ENCODE measurements at regions of chr2 and their contacts with region 1.

Region 1: GRCh38 chr2:70919672-70920366 is 15.9 kb upstream of the ATP6V1B1 start:
- DNase-seq: peak; percentile 86
- ATAC-seq: peak; percentile 74
- H3K4me3 Mint-ChIP-seq: no peak overlapping the region
- H3K27ac Mint-ChIP-seq: no peak overlapping the region
- H3K4me1 Mint-ChIP-seq: no peaks in the 10 kb centered on the region
- H3K27me3 Mint-ChIP-seq: peaks cover 14% of the 10 kb centered on the region

Region 2: DNA sequence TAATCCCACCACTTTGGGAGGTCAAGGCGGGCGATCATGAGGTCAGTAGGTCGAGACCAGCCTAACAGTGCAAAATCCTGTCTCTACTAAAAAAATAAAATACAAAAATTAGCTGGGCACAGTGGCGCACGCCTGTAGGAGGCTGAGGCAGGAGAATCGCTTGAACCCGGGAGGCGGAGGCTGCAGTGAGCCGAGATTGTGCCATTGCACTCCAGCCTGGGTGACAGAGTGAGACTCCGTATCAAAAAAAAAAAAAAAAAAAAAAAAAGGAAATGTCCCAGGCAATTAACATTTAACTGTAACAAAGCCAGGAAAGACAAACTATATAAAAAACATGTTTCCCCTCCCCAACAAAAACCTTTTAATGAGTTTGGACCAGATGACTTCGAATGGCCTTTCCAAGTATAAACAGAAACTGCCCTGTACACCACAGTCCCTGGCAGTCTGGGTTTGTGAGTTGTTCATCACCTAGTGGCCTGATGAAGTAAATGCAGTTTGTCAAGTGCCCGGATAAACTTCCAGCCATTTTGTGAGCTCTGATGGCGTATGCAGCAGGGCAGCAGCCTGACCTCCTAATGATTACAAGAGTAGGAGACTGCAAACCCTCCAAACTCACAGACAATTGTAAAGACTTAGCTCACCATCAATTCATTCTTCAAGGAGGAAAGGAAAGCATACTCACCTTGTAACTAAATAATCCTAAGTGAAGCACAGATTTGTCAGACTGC is 849.1 kb before region 1 on chr2:
- CTCF ChIA-PET with region 1: no interaction called
- POLR2A ChIA-PET with region 1: no interaction called
- intact Hi-C with region 1: no loop called
- DNase-seq: peak; percentile 73
- ATAC-seq: peak; percentile 60
- H3K4me3 Mint-ChIP-seq: peak overlapping the region; percentile 48
- H3K27ac Mint-ChIP-seq: peak overlapping the region; percentile 94
- H3K4me1 Mint-ChIP-seq: peaks cover 51% of the 10 kb centered on the region
- H3K27me3 Mint-ChIP-seq: no peaks in the 10 kb centered on the region

Region 3: DNA sequence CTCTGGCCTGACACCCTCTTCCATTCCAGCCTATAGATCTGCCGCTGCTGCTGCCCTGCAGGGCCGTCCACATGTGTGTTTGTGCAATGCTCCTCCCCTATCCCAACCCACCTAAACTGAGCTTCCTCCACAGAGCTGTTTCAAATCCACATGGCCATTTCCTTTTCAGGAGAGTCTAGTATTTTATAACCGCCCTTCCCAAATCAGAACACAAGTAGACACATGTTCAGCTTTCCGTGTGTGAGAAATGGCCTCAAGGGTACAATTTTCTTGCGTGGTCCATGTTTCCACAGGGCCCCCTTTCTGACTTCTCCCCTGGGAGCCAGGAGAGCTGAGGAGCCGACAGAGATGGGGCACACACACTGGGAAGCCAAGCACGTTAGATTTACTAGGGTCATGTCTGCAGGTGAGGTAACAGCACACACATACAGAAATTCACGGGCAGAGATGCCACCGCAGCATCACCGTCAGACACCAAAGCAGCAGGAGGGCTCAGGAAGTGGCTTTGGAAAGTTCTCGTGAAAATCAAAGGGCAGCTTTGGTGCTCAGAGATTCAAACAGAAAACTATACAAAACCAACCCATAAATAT is 263.3 kb before region 1 on chr2:
- CTCF ChIA-PET with region 1: no interaction called
- POLR2A ChIA-PET with region 1: no interaction called
- intact Hi-C with region 1: loop called in 1 of 2 experiments (anchors 1 kb)
- DNase-seq: peak; percentile 57
- ATAC-seq: peak; percentile 61
- H3K4me3 Mint-ChIP-seq: no peak overlapping the region
- H3K27ac Mint-ChIP-seq: peak overlapping the region; percentile 29
- H3K4me1 Mint-ChIP-seq: peaks cover 32% of the 10 kb centered on the region
- H3K27me3 Mint-ChIP-seq: no peaks in the 10 kb centered on the region

Region 4: GRCh38 chr2:70789304-70790135 is 130.3 kb before region 1 on chr2:
- CTCF ChIA-PET with region 1: interaction called, 24 read pairs
- POLR2A ChIA-PET with region 1: no interaction called
- intact Hi-C with region 1: loop called in 1 of 2 experiments (anchors 1 kb)
- DNase-seq: peak; percentile 88
- ATAC-seq: peak; percentile 84
- H3K4me3 Mint-ChIP-seq: peak overlapping the region; percentile 56
- H3K27ac Mint-ChIP-seq: peak overlapping the region; percentile 27
- H3K4me1 Mint-ChIP-seq: peaks cover 11% of the 10 kb centered on the region
- H3K27me3 Mint-ChIP-seq: peaks cover 50% of the 10 kb centered on the region

Region 5: DNA sequence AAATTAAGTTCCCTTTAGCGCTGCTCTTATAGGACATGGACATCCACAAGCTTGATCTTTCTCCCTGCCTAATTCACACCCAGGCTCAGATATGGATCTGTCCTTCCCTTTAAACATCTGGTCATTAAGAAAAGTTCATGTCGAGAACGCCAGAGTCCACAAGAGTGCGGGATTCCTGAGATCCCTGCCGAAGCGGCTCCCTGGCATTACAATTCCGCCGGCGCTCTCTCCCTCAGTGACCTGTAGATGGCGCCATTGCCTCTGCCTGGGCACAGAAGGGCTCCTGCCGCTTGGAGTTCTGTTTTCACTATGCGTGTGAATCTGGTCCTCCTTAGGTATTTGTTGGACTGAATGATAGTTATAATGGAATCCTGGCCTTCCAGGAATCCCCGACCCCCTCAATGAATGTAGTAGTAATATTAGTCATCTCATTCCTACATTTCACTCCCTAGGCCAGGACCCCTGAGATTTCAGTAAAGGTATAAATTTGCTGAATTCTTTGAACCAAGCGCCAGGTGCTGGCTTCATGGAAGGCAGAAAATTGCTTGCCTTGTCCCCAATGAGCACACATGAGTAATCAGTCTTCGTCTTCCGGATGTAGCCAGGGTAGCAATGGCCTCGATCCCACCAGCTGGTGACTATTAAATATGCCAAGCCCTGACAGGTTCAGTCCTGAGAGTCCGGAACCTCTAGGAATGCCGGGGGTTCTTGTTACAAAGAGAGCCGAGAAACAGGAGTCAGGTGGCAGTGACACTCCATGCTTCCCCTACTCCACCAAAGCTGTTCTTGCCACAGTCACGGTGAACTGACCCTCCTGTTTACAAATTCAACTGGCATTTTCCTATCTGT is 57.8 kb before region 1 on chr2:
- CTCF ChIA-PET with region 1: interaction called, 25 read pairs
- POLR2A ChIA-PET with region 1: no interaction called
- intact Hi-C with region 1: no loop called
- DNase-seq: peak; percentile 86
- ATAC-seq: peak; percentile 89
- H3K4me3 Mint-ChIP-seq: no peak overlapping the region
- H3K27ac Mint-ChIP-seq: no peak overlapping the region
- H3K4me1 Mint-ChIP-seq: peaks cover 2% of the 10 kb centered on the region
- H3K27me3 Mint-ChIP-seq: peaks cover 33% of the 10 kb centered on the region

Region 6: GRCh38 chr2:71276311-71277146 is 356.7 kb after region 1 on chr2:
- CTCF ChIA-PET with region 1: no interaction called
- POLR2A ChIA-PET with region 1: no interaction called
- intact Hi-C with region 1: no loop called
- DNase-seq: peak; percentile 94
- ATAC-seq: peak; percentile 100
- H3K4me3 Mint-ChIP-seq: peak overlapping the region; percentile 67
- H3K27ac Mint-ChIP-seq: no peak overlapping the region
- H3K4me1 Mint-ChIP-seq: peaks cover 14% of the 10 kb centered on the region
- H3K27me3 Mint-ChIP-seq: peaks cover 76% of the 10 kb centered on the region

Region 7: DNA sequence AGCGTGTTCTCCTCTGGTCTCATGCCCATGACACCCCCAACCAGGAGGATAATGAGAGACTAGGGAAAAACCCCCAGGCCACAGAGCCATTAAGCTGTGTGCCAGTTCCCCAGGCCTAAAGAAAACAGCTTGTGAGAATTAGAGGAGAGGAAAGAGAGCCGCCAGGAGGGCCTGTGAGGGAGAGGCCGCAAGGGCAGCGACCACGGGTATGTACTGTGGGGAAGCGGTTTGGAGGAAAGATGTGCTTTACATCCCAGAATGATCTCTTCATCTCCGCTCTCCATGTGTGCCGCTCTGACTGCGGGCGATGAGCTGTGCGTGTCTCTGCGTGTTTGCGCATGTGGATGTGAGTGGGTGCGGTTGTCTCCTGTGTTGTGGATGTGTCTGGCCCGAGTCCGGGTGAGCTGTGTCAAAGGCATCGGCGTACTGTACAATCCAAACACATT is 616.4 kb after region 1 on chr2:
- CTCF ChIA-PET with region 1: no interaction called
- POLR2A ChIA-PET with region 1: no interaction called
- intact Hi-C with region 1: no loop called
- DNase-seq: no peak
- ATAC-seq: no peak
- H3K4me3 Mint-ChIP-seq: no peak overlapping the region
- H3K27ac Mint-ChIP-seq: no peak overlapping the region
- H3K4me1 Mint-ChIP-seq: peaks cover 2% of the 10 kb centered on the region
- H3K27me3 Mint-ChIP-seq: peaks cover 11% of the 10 kb centered on the region

Measured in activated CD4-positive, alpha-beta T cell treated with anti-CD3 and anti-CD28 coated beads for 36 hours (primary cell).